ENCODE measurements at regions of chr3 and their contacts with region 1.

Region 1: GRCh38 chr3:194769020-194769643 is 83.4 kb downstream of the FAM43A start:
- DNase-seq: peak; percentile 86
- H3K4me3 Mint-ChIP-seq: peak overlapping the region; percentile 76
- H3K27ac Mint-ChIP-seq: peak overlapping the region; percentile 67
- H3K4me1 Mint-ChIP-seq: peaks cover 21% of the 10 kb centered on the region
- H3K27me3 Mint-ChIP-seq: peaks cover 21% of the 10 kb centered on the region

Region 2: DNA sequence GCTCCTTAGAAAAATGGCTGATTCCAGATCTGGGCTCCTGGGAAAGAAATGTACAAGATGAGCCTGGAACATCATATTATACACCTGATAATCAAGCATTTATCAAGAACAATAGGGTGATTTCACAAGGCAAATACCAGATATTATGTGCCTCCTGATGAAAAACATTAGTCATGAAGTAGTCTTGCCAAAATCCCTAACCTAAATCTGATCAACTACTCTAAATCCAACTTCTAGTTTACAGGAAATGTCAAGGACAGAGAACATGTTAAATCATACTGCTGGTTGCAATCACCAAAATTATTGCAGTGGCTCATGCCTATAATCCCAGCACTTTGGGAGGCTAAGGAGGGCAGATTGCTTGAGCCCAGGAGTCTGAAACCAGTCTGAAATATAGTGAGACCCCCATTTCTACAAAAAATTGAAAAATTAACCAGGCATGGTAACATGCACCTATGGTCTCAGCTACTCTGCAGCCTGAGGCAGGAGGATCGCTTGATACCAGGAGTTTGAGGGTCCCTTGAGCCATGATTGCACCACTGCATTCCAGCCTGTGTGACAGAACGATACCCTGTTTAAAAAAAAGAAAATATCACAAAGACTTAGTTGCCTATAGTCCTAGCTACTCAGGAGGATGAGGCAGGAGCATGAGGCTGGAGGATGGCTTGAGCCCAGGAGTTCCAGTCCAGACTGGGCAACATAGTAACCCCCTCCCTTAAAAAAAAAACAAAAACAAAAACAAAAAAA is 247.4 kb before region 1 on chr3:
- intact Hi-C with region 1: loop called (anchors 2 kb)
- DNase-seq: no peak
- H3K4me3 Mint-ChIP-seq: no peak overlapping the region
- H3K27ac Mint-ChIP-seq: no peak overlapping the region
- H3K4me1 Mint-ChIP-seq: peaks cover 37% of the 10 kb centered on the region
- H3K27me3 Mint-ChIP-seq: peaks cover 3% of the 10 kb centered on the region

Region 3: DNA sequence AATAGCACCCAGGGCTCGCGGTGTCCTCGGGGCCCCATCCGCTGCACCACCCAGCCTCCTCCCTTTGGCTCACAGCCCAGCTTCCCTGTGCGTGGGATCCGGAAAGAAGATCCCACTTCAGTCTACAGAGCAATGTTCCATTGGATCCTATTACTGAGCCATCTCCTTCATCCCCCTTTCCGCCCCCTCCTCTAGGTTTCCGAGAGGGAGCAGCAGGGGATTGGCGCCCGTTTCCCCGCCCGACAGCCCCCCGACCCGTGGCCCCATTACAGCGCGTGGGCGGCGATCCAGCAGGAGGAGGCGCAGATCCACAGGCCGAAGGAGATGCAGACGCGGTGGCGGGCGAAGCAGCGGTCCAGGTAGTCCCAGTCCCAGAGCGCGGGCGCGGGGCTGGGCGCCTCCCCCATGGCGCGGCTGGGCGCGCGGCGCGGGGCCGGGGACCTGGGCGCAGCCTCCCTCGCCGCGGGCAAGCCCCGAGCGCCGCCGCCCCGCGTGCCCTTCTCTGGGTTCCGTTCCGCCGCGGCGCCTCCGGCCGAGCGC is 136.3 kb before region 1 on chr3:
- intact Hi-C with region 1: loop called (anchors 1 kb)
- DNase-seq: no peak
- H3K4me3 Mint-ChIP-seq: peak overlapping the region; percentile 80
- H3K27ac Mint-ChIP-seq: no peak overlapping the region
- H3K4me1 Mint-ChIP-seq: no peaks in the 10 kb centered on the region
- H3K27me3 Mint-ChIP-seq: peaks cover 5% of the 10 kb centered on the region

Region 4: GRCh38 chr3:194682694-194683310 is 86.3 kb before region 1 on chr3:
- intact Hi-C with region 1: loop called (anchors 1 kb)
- DNase-seq: peak; percentile 58
- H3K4me3 Mint-ChIP-seq: no peak overlapping the region
- H3K27ac Mint-ChIP-seq: no peak overlapping the region
- H3K4me1 Mint-ChIP-seq: peaks cover 42% of the 10 kb centered on the region
- H3K27me3 Mint-ChIP-seq: peaks cover 20% of the 10 kb centered on the region

Region 5: DNA sequence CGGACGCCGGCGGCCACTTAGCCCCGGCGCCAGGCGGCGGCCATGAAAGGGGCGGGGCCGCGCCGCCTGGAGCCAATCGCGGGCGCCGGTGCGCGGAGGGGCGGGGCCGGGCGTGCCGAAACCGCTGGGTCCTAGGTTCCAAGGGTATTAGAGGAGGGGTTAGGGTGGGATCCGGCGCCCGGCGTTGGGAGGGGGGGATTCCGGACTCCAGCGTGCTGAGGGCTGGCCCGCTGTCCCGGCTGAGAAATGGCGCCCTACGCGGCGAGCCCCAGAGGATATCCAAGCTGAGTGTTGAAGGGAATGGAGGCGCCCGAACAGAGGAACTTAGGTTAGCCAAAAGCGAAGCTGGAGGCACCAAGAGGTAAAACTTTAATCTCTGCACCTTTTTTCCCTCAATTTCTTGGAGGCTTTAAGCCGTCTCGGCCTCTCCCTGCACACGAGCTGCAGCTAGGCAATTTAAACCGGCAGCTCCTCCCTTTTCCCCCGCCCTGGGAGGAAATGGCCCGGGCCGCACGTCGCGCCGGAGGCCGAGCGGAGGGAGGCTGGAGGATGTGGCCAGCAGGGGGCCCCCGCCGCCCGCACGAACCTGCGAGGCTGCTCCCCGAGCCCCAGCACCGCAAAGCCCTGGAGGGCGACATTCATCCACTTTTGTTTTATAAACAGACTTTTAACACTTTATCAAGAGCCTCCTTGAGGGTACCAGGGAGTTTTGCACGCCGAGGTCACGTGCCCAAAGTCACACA is 502.2 kb after region 1 on chr3 and contains the start of gene XXYLT1:
- intact Hi-C with region 1: loop called (anchors 1 kb)
- DNase-seq: peak; percentile 85
- H3K4me3 Mint-ChIP-seq: peak within 1 kb of the TSS; percentile 89
- H3K27ac Mint-ChIP-seq: peak within 1 kb of the TSS; percentile 91
- H3K4me1 Mint-ChIP-seq: peaks cover 30% of the 10 kb centered on the region
- H3K27me3 Mint-ChIP-seq: no peaks in the 10 kb centered on the region
- total RNA-seq, gene XXYLT1: 14.5 and 14.9 TPM in 2 replicates

Region 6: DNA sequence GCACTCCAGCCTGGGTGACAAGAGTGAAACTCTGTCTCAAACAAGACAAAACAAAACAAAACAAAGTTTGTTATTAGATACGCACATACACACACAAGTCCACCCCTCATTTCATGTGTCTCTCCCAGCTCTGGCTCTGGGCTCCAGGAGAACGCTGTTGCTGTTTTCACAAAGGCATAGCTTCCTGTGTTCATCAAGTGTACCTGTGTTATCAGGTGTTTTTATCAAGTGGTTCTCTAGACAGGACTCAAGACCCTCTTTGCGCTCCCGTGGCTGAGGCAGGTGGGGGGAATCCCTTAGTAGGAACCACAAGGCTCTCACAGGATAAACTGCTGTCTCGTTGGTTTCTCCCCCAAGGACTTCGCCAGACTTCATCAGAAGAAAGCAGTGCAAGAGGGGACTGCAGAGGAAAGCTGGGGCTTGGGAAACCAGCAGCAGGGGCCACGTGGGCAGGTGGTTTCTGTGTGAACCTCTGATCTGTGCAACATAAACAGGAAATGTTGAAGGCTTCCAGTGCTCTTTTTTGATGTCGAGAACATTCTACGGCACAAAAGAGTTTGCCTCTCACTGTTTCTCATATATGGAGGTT is 780.9 kb after region 1 on chr3:
- intact Hi-C with region 1: loop called (anchors 5 kb)
- DNase-seq: peak; percentile 75
- H3K4me3 Mint-ChIP-seq: peak overlapping the region; percentile 73
- H3K27ac Mint-ChIP-seq: peak overlapping the region; percentile 92
- H3K4me1 Mint-ChIP-seq: peaks cover 76% of the 10 kb centered on the region
- H3K27me3 Mint-ChIP-seq: no peaks in the 10 kb centered on the region